Activated B cell treated with CpG ODN at 0.5 μM for 24 hours (primary cell): ENCODE measurements at regions of chr4 and their contacts with region 1.

Region 1: DNA sequence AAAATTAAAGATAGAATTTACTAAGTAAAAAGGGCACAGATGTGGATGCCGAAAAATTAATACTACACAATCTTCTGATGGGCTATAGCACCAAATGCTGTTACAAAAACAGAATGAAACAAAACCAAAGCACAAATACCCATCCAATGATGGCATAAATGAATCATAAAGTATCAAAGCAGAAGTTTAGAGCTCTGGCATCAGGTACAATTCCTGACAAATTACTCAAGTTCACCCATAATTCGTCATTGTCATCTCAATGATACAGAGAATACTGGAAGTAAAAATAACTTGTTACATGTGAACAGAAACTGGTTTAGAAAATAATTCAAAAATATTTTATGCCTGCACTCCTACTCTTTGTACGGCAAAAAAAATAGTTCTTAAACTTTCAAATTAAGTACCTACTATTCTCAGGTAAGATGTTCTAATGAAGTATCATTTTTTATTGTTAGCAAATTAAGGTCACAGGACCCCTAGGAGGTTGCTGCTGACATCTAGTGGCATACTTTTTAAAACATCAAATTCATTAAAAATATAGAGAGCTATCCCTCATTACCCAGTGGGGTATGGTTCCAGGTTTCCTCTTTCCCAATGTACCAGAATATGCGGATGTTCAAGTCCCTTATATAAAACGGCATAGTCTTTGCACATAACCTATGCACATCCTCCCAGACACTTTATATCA is 126.1 kb downstream of the INPP4B start:
- DNase-seq: no peak
- ATAC-seq: no peak
- H3K4me3 Mint-ChIP-seq: no peak overlapping the region
- H3K27ac Mint-ChIP-seq: no peak overlapping the region
- H3K4me1 Mint-ChIP-seq: no peaks in the 10 kb centered on the region
- H3K27me3 Mint-ChIP-seq: no peaks in the 10 kb centered on the region
- CTCF ChIP-seq: no peak

Region 2: GRCh38 chr4:141307241-141307689 is 1412.7 kb before region 1 on chr4:
- CTCF ChIA-PET with region 1: interaction called, 3 read pairs
- POLR2A ChIA-PET with region 1: no interaction called
- intact Hi-C with region 1: loop called (anchors 5 kb)
- DNase-seq: peak; percentile 21
- ATAC-seq: peak; percentile 81
- H3K4me3 Mint-ChIP-seq: no peak overlapping the region
- H3K27ac Mint-ChIP-seq: no peak overlapping the region
- H3K4me1 Mint-ChIP-seq: peaks cover 10% of the 10 kb centered on the region
- H3K27me3 Mint-ChIP-seq: peaks cover 5% of the 10 kb centered on the region
- CTCF ChIP-seq: peak; percentile 30

Region 3: GRCh38 chr4:142126890-142127497 is 593.0 kb before region 1 on chr4:
- CTCF ChIA-PET with region 1: no interaction called
- POLR2A ChIA-PET with region 1: no interaction called
- intact Hi-C with region 1: loop called (anchors 2 kb)
- DNase-seq: no peak
- ATAC-seq: no peak
- H3K4me3 Mint-ChIP-seq: no peak overlapping the region
- H3K27ac Mint-ChIP-seq: no peak overlapping the region
- H3K4me1 Mint-ChIP-seq: no peaks in the 10 kb centered on the region
- H3K27me3 Mint-ChIP-seq: no peaks in the 10 kb centered on the region
- CTCF ChIP-seq: no peak

Region 4: DNA sequence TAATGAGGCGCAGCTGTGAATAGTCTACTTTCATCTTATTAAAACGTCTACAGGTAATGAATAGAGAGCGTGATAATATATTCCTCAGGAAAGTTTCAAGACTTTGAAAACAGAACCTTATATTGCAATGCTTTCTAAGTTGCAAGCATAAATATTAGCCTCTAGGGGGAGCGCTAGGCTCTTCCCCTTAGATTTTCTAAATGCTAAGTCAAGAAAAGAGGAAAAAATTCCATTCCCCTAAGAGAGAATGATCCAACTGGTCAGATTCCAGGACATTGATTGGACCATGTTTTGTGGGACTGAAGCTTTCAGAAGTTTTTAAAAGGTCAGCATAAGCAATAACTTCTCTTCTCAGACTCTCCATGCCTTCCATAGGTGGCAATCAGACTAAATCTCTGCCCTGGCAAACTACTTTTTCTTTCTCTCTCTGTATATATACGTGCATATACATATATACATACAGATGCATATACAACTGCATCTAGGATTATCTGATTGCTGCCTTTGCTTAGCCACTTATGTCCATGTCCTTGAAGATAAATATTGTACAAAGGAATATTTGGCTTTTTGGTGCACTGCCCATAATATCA is 366.8 kb before region 1 on chr4:
- CTCF ChIA-PET with region 1: no interaction called
- POLR2A ChIA-PET with region 1: no interaction called
- intact Hi-C with region 1: loop called (anchors 2 kb)
- DNase-seq: no peak
- ATAC-seq: no peak
- H3K4me3 Mint-ChIP-seq: no peak overlapping the region
- H3K27ac Mint-ChIP-seq: no peak overlapping the region
- H3K4me1 Mint-ChIP-seq: peaks cover 5% of the 10 kb centered on the region
- H3K27me3 Mint-ChIP-seq: no peaks in the 10 kb centered on the region
- CTCF ChIP-seq: no peak

Region 5: DNA sequence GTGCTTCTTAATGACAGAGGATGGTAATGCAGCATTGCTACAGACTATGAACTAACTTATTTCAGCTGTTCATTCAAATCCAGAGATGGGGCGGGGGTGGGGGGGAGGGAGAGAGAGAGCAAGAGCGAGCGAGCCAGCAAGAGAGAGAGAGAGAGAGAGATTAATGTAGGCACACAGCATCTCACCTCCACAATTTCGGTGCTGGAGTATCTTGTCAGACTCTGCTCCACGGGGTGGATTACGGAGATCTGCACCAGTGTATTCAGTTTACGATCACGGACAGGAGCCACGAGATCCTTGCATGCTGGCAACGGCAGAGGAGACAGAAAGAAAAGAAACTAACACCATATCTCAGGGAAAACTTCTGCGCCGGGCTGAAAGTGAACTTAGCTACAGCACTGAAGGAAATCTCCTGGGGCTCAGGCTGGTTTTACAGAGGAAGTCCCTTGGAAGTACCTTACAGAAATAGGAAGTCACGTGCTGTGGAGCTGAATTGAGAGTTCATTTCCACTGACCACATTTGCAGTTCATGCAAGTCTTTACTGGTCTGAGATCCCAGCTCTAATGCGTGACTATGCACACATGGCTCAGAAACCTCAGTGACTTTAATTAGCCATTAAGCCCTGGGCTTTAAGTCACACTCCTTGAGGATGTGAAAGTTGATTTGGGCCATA is 314.8 kb before region 1 on chr4:
- CTCF ChIA-PET with region 1: no interaction called
- POLR2A ChIA-PET with region 1: no interaction called
- intact Hi-C with region 1: no loop called
- DNase-seq: no peak
- ATAC-seq: peak; percentile 25
- H3K4me3 Mint-ChIP-seq: peak overlapping the region; percentile 62
- H3K27ac Mint-ChIP-seq: no peak overlapping the region
- H3K4me1 Mint-ChIP-seq: peaks cover 10% of the 10 kb centered on the region
- H3K27me3 Mint-ChIP-seq: peaks cover 2% of the 10 kb centered on the region
- CTCF ChIP-seq: no peak

Region 6: GRCh38 chr4:142778430-142778829 is 58.4 kb after region 1 on chr4:
- CTCF ChIA-PET with region 1: no interaction called
- POLR2A ChIA-PET with region 1: no interaction called
- intact Hi-C with region 1: no loop called
- DNase-seq: no peak
- ATAC-seq: no peak
- H3K4me3 Mint-ChIP-seq: no peak overlapping the region
- H3K27ac Mint-ChIP-seq: no peak overlapping the region
- H3K4me1 Mint-ChIP-seq: no peaks in the 10 kb centered on the region
- H3K27me3 Mint-ChIP-seq: no peaks in the 10 kb centered on the region
- CTCF ChIP-seq: no peak